ENCODE measurements at regions of chr11 and their contacts with region 1.

Region 1: GRCh38 chr11:61816736-61817455 is at the start of gene FADS1:
- DNase-seq: peak; percentile 92
- total RNA-seq, gene FADS1: 34.0 TPM

Region 2: GRCh38 chr11:61860054-61860903 is 43.4 kb after region 1 on chr11:
- intact Hi-C with region 1: loop called (anchors 2 kb)
- DNase-seq: peak; percentile 87

Region 3: GRCh38 chr11:61871158-61871597 is 54.3 kb after region 1 on chr11:
- intact Hi-C with region 1: loop called (anchors 5 kb)
- DNase-seq: peak; percentile 90

Region 4: DNA sequence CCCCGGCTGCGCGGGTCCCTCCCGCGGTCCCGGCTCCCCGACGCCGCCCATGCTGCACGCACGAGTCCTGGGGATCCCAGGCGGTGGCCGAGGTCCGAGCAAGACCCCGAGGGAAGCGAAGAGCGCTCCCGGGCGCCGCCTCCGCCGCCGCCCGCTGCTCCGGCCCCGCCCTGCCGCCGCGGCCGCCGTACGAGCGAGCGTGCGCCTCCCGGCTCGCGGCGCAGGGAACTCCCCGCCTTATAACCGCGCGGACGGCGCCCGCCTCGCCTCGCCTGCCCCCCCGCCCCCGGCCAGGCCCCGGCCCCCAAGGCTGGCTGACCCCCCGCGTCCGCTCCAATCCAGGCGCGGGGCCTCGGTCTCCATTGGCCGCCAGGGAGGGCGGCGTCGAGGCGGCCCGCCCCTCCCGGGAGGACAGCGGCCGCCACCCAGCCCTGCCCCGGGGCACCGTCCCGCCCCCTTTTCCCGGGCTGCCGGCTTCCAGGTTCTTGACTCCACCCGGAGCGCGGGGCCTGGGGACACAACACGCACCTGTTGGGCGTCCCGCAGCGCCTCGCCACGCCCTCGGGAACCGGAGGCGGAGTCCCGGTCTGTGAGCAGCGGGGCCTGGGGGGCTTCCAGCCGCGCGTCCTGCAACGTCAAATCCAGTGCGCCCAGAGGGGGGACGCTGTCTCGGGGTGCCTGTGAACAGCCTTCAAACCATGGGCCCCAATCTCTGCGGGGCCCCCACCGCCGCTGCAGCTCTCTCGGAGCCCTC is 74.6 kb after region 1 on chr11 and contains the start of gene FADS3:
- intact Hi-C with region 1: loop called (anchors 2 kb)
- DNase-seq: peak; percentile 92
- total RNA-seq, gene FADS3: 126 TPM

Region 5: DNA sequence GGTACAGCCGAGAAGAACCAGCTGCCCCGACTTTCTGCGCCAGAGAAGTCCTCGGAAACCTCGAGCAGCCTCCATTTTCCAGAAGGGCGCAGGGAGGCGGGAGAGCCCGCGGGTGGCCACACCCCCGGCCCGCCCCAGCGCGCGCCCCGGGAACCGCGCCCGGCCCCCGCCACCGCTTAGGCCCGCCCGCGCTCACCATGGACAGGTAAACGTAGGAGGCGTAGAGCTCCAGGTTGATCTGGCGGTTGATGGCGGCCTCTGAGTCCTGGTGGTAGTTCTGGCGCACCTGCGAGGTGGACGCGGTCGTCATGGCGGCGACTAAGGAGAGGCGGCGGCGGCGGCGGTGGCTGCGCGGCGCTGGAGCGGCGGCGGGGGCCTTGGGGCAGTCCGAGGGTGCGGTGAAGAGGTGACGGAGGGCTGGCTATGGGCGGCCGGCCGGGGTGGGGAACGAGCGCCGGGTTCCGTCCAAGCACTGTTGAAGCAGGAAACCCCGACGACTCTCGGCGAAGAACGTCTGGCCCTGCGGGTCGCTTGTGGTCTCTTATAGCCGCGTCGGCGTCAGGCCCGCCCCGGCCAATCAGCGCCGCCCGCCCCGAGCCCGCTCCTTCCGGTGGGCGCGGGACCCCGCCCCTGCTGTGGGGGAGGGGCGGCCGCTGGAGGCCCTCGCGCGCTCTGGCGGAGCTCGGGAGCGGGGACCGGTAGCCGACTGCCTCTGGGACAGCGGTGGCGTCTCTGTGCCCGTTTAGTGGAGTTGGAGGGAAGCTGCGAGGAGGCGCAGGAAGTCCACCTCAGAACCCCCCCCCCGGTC is 150.4 kb after region 1 on chr11 and contains the start of gene FTH1:
- intact Hi-C with region 1: loop called (anchors 5 kb)
- DNase-seq: peak; percentile 97
- total RNA-seq, gene FTH1: 3,174 TPM

Measured in cardiac septum (tissue), 1 donor.